Heart left ventricle (tissue), 16 donors: ENCODE measurements at regions of chr19 and their contacts with region 1.

Region 1: GRCh38 chr19:32971715-32972540 is at the starts of genes CEP89 and FAAP24:
- DNase-seq: peak; percentile 97 to 98 (median 98)
- ATAC-seq: peak; percentile 99 to 100 (median 100)
- H3K4me3 ChIP-seq: peak within 1 kb of the TSS; percentile 57 to 87 (median 75)
- H3K27ac ChIP-seq: peak within 1 kb of the TSS; percentile 7 to 81 (median 65)
- H3K4me1 ChIP-seq: peaks cover 0 to 22% (median 10%) of the 10 kb centered on the region in 12 donors
- H3K27me3 ChIP-seq: no peaks in the 10 kb centered on the region
- CTCF ChIP-seq: no peak
- POLR2A ChIP-seq: peak in 1 of 2 donors; percentile 30
- total RNA-seq, gene CEP89: 8.4 to 16.0 (median 12.0) TPM
- total RNA-seq, gene FAAP24: 0.25 to 2.6 (median 0.67) TPM in 6 of 9 donors, not detected in the others

Region 2: DNA sequence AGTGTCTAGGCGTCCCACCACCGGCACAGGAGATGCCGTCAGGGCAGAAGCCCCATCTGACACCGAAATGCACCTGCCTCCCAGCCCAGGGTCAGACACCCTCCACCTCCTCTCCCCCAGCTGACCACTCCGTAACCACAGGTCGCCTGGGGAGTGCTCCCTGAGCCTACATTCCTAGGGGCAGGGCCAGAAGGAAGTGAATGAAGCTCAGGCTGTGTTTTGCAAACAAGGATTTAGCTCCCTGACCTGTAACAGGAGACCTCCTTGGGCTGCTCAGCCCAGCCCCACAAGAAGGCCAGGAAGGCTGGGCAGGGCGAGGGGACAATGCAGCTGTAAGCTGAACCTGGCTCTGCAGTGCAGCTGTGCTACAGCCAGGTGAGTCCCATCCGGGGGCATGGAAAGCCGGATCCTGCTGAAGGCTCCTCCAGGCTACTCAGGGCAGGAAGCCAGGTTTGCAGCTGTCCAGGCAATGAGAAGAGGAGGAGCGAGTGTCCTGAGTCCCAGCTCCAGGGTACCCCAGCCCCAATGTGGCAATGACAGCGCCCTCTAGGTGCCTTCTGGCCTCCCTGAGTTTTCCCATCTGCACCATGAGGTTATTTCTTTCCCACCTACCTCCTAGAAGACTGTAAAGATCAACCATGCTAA is 50.7 kb after region 1 on chr19:
- intact Hi-C with region 1: no loop called
- DNase-seq: no peak
- ATAC-seq: no peak
- H3K4me3 ChIP-seq: no peak overlapping the region
- H3K27ac ChIP-seq: no peak overlapping the region
- H3K4me1 ChIP-seq: no peaks in the 10 kb centered on the region
- H3K27me3 ChIP-seq: no peaks in the 10 kb centered on the region
- CTCF ChIP-seq: no peak
- POLR2A ChIP-seq: no peak

Region 3: GRCh38 chr19:33080761-33081681 is 109.1 kb after region 1 on chr19 and contains the start of gene GPATCH1:
- intact Hi-C with region 1: loop called in 4 of 10 experiments (anchors 5 to 10 kb)
- DNase-seq: peak; percentile 89 to 93 (median 91)
- ATAC-seq: peak; percentile 93 to 99 (median 97)
- H3K4me3 ChIP-seq: peak within 1 kb of the TSS; percentile 71 to 97 (median 82)
- H3K27ac ChIP-seq: peak within 1 kb of the TSS in 11 of 12 donors; percentile 26 to 85 (median 76)
- H3K4me1 ChIP-seq: peaks cover 0 to 26% (median 11%) of the 10 kb centered on the region in 12 donors
- H3K27me3 ChIP-seq: no peaks in the 10 kb centered on the region
- CTCF ChIP-seq: peak in 1 of 12 donors; percentile 11
- POLR2A ChIP-seq: peak in 1 of 2 donors; percentile 42
- total RNA-seq, gene GPATCH1: 3.4 to 6.7 (median 6.4) TPM

Region 4: DNA sequence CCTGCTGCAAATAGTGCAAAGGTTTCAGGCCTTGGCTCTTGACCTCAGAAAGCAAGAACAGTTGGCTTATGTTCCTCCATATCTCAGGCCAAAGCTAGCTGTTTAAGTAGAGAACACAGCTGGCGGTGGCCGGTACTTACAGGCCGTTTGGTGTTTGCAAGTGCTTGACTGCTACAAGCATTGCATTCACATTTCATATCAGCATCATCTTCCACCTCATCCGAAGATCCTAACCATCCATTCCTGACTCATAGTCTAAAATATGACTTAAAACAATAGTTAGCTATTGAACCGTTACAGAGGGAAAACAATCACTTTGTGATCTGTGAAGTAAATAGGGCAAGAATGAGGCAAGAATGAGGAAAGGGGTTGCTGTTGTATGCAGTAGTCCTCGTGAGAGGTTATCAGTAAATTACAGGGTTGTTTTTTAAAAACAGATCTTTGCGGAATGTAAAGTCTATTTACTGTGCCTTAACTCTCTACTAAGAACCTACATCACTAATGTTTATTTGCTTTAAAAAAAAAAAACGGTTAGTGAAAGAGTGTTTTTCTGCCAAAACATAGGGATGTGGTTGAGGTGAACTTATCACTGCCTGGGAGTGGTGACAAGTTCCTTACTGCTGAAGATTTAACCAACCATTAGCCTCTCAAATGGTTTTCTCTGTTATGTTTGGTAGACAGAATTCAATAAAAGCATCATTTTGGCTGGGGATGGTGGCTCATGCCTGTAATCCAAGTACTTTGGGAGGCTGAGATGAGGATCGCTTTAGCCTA is 138.4 kb after region 1 on chr19:
- intact Hi-C with region 1: loop called in 1 of 10 experiments (anchors 10 kb)
- DNase-seq: no peak
- ATAC-seq: no peak
- H3K4me3 ChIP-seq: no peak overlapping the region
- H3K27ac ChIP-seq: no peak overlapping the region
- H3K4me1 ChIP-seq: no peaks in the 10 kb centered on the region
- H3K27me3 ChIP-seq: no peaks in the 10 kb centered on the region
- CTCF ChIP-seq: no peak
- POLR2A ChIP-seq: no peak

Region 5: DNA sequence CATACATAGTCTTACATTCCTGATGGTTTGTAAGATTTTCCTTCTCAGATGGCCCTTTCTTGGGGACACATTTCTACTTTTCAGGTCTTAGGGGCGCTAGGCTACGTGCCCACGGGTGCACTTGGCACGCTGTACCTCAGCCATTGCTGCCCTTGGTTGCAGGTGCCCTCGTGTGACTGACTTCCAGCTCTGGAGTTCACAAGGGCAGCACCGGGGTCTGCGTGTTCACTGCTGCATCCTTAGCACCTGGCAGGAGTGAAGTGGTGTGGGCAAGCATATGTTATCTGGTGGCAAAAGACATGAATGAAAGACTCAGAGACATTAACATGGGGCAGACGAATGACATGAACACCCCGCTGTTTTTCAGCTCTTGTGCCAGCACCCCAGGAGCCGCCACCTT is 146.7 kb after region 1 on chr19:
- intact Hi-C with region 1: loop called in 3 of 10 experiments (anchors 2 to 10 kb)
- DNase-seq: no peak
- ATAC-seq: no peak
- H3K4me3 ChIP-seq: no peak overlapping the region
- H3K27ac ChIP-seq: no peak overlapping the region
- H3K4me1 ChIP-seq: no peaks in the 10 kb centered on the region
- H3K27me3 ChIP-seq: no peaks in the 10 kb centered on the region
- CTCF ChIP-seq: no peak
- POLR2A ChIP-seq: no peak

Region 6: DNA sequence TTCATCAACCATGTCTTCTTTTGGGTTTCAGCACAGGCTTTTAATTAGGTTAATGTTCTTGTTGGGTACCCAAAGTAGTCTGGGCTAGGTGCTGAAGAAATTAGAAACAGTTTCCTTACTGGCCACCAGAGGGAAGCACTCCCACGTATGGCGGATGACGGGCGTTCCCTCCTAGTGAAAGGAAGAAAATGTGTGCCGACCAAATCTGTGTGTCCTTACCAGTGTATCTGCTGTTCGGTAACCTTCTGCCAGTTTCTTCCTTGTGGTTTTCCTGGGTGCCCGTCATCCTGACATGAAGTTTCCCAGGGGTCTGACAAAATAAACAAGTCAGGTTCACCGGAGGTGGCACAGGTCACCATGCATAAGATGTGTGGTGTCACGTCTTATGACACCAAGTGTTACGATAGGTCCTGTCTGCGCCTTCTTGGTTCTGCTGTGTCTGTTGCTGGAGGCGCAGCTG is 154.0 kb after region 1 on chr19:
- intact Hi-C with region 1: loop called in 2 of 10 experiments (anchors 5 to 10 kb)
- DNase-seq: peak in 4 of 5 donors; percentile 35 to 50 (median 43)
- ATAC-seq: peak; percentile 63 to 88 (median 83)
- H3K4me3 ChIP-seq: no peak overlapping the region
- H3K27ac ChIP-seq: no peak overlapping the region
- H3K4me1 ChIP-seq: peaks cover 0 to 5% (median 0%) of the 10 kb centered on the region in 12 donors
- H3K27me3 ChIP-seq: no peaks in the 10 kb centered on the region
- CTCF ChIP-seq: peak; percentile 71 to 87 (median 82)
- POLR2A ChIP-seq: no peak

Region 7: DNA sequence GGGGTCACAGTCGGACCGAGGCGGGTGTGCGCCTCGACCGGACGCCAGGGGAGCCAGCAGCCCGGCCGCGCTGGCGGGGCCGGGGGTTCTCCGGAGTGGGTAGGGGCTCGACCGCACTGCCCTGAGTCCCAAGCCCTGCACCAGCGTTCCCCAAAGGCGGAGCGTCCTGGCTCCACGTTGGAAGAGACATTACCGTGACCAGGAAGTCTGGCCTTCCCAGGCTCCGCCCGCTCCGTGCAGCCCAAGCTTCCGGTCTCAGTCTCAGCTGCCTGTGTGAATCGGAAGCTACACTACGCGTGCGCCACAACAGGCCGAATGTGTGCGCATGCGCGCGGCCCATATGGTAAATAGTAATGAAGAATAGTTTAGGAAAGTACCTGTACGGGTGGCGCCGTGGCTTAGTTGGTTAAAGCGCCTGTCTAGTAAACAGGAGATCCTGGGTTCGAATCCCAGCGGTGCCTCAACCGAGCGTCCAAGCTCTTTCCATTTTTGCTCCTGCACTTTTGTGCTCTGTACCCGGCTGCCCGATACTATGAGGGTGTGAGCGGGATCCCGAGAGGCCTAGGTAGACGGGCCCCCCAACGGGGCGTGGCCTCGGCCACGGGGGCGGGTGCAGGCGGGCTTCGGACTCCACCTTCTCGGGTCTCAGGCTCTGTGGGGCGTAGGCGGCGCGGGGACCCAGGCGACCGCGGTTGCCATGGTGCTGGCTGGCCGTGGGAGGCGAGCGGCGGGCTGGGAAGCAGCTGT is 204.9 kb after region 1 on chr19:
- intact Hi-C with region 1: loop called in 1 of 10 experiments (anchors 10 kb)
- DNase-seq: peak; percentile 94 to 97 (median 97)
- ATAC-seq: peak; percentile 94 to 96 (median 95)
- H3K4me3 ChIP-seq: peak overlapping the region; percentile 64 to 99 (median 88)
- H3K27ac ChIP-seq: peak overlapping the region; percentile 85 to 98 (median 94)
- H3K4me1 ChIP-seq: peaks cover 0 to 32% (median 21%) of the 10 kb centered on the region in 12 donors
- H3K27me3 ChIP-seq: no peaks in the 10 kb centered on the region
- CTCF ChIP-seq: peak in 3 of 12 donors; percentile 10 to 39 (median 19)
- POLR2A ChIP-seq: peak in 1 of 2 donors; percentile 78